GM12878 (cell line): ENCODE measurements at regions of chr1 and their contacts with region 1.

Region 1: GRCh38 chr1:27111626-27112573 is 43.0 kb downstream of the SLC9A1 start:
- DNase-seq: no peak
- ATAC-seq: peak; percentile 98
- H3K4me3 ChIP-seq: no peak overlapping the region
- H3K27ac ChIP-seq: peak overlapping the region; percentile 80
- H3K4me1 ChIP-seq: peaks cover 13% of the 10 kb centered on the region
- H3K27me3 ChIP-seq: no peaks in the 10 kb centered on the region
- CTCF ChIP-seq: peak; percentile 36 to 63 (median 53); a peak in 4 of 6 replicates
- EP300 ChIP-seq: no peak
- POLR2A ChIP-seq: peak; percentile 49
- RAD21 ChIP-seq: peak; percentile 75

Region 2: GRCh38 chr1:27097484-27097917 is 14.4 kb before region 1 on chr1:
- CTCF ChIA-PET with region 1: interaction called, 69 read pairs
- POLR2A ChIA-PET with region 1: interaction called, 6 read pairs
- RAD21 ChIA-PET with region 1: interaction called, 24 read pairs
- SMC1A ChIA-PET with region 1: interaction called, 12 read pairs
- in situ Hi-C with region 1: no loop called
- intact Hi-C with region 1: no loop called
- DNase-seq: no peak
- ATAC-seq: peak; percentile 78
- H3K4me3 ChIP-seq: no peak overlapping the region
- H3K27ac ChIP-seq: no peak overlapping the region
- H3K4me1 ChIP-seq: peaks cover 14% of the 10 kb centered on the region
- H3K27me3 ChIP-seq: no peaks in the 10 kb centered on the region
- CTCF ChIP-seq: peak; percentile 94 to 97 (median 94)
- EP300 ChIP-seq: no peak
- POLR2A ChIP-seq: no peak
- RAD21 ChIP-seq: peak; percentile 81

Region 3: DNA sequence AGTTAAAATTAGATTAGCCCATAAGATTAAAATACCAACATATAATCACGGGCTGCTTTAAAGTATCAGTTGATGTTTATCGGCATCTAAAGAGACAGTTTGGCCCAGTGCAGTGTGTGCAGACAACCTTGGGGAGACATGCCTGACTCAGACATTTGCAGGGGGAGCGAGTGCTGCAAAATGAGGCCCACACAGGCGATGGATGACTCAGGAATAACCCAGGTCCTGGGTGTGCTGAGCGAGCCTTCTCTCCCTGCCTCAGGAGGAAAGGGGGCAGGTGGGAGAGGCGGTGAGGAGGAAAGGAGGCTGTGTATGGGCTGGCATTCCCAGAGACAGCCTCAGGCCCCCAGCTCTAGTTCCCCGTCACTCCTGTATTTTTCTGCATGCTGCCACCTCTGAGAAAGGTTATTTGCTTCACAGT is 34.0 kb after region 1 on chr1:
- CTCF ChIA-PET with region 1: interaction called, 18 read pairs
- POLR2A ChIA-PET with region 1: interaction called, 7 read pairs
- RAD21 ChIA-PET with region 1: interaction called, 6 read pairs
- SMC1A ChIA-PET with region 1: interaction called, 4 read pairs
- in situ Hi-C with region 1: no loop called
- intact Hi-C with region 1: loop called (anchors 5 kb)
- DNase-seq: no peak
- ATAC-seq: no peak
- H3K4me3 ChIP-seq: no peak overlapping the region
- H3K27ac ChIP-seq: no peak overlapping the region
- H3K4me1 ChIP-seq: peaks cover 19% of the 10 kb centered on the region
- H3K27me3 ChIP-seq: no peaks in the 10 kb centered on the region
- CTCF ChIP-seq: no peak
- EP300 ChIP-seq: no peak
- POLR2A ChIP-seq: no peak
- RAD21 ChIP-seq: no peak

Region 4: GRCh38 chr1:27154991-27155781 is 43.3 kb after region 1 on chr1 and contains the start of gene SLC9A1:
- CTCF ChIA-PET with region 1: interaction called, 40 read pairs
- POLR2A ChIA-PET with region 1: interaction called, 8 read pairs
- RAD21 ChIA-PET with region 1: interaction called, 12 read pairs
- SMC1A ChIA-PET with region 1: interaction called, 7 read pairs
- in situ Hi-C with region 1: no loop called
- intact Hi-C with region 1: loop called (anchors 5 kb)
- DNase-seq: peak; percentile 75
- ATAC-seq: peak; percentile 89
- H3K4me3 ChIP-seq: peak within 1 kb of the TSS; percentile 82
- H3K27ac ChIP-seq: peak within 1 kb of the TSS; percentile 79
- H3K4me1 ChIP-seq: peaks cover 21% of the 10 kb centered on the region
- H3K27me3 ChIP-seq: no peaks in the 10 kb centered on the region
- CTCF ChIP-seq: peak; percentile 82 to 96 (median 92)
- EP300 ChIP-seq: 0 out of 4 replicates have a peak, but pooled peaks of 1 of the 2 experiments have one; percentile 41
- POLR2A ChIP-seq: peak; percentile 99
- RAD21 ChIP-seq: peak; percentile 35; the same call in 1 of the 2 replicates
- polyA plus RNA-seq, gene SLC9A1: 0.87 to 1.1 TPM

Region 5: DNA sequence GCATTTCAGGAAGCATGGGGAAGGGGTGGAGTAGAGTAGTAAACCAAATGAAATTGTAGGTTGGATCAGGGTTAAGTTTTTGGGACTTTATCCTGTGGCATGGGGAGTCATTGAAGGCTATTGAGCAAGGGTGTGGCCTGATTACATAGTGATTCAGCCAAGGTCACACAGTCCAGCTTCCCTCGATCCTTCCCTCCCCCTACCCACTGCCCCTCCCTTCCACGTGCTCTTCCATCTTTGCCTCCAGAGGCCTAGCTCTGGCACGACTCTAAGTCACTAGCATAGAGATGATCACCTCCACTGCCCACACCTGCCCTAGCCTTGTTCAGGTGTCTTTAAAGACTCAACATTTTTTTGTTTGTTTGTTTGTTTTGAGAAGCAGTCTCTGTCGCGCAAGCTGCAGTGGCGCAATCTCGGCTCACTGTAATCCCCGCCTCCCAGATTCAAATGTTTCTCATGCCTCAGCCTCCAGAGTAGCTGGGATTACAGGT is 80.2 kb after region 1 on chr1:
- CTCF ChIA-PET with region 1: interaction called, 43 read pairs
- POLR2A ChIA-PET with region 1: no interaction called
- RAD21 ChIA-PET with region 1: interaction called, 13 read pairs
- SMC1A ChIA-PET with region 1: interaction called, 12 read pairs
- in situ Hi-C with region 1: no loop called
- intact Hi-C with region 1: no loop called
- DNase-seq: no peak
- ATAC-seq: no peak
- H3K4me3 ChIP-seq: no peak overlapping the region
- H3K27ac ChIP-seq: no peak overlapping the region
- H3K4me1 ChIP-seq: no peaks in the 10 kb centered on the region
- H3K27me3 ChIP-seq: no peaks in the 10 kb centered on the region; a peak in 1 of 4 replicates
- CTCF ChIP-seq: no peak
- EP300 ChIP-seq: no peak
- POLR2A ChIP-seq: no peak
- RAD21 ChIP-seq: no peak